Naive thymus-derived CD4-positive, alpha-beta T cell (primary cell): ENCODE measurements at regions of chr6 and their contacts with region 1.

Region 1: DNA sequence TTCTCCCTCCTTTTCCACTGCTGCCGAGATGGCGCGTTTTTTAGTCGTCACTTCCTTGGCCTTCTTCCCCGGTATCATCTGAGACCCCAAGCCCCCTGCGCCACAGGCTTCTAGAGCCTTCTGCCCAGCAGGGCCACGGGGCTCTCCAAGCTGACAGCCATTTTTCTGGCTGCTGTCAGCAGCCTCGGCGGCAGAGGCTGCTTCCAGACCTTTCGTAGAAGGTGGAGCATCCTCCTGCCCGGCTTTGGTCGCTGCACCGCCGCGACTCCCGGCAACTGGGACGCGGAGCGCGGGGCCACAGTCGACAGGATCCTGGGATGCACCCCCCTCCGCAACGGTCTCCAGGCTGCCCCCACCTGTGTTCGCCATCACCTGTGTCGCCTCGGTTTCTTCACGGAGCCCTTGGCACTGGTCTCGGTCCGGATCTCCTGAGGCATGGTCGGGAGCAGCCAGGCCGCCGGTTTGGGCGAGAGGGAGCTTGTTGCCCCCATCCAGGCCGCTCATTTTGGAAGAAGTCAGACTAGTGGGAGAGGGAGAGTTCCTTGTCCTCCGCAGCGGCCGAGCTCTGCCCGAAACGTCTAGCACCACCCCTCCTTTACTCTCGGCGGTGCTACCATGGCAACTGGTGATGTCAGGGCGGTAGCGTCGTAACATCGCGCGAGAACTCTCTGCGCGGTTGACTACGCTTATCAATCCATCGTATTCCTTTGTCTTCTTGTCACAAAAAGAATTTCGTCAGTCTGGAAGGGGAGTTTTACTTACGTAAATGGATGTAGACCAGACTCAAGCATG is at the start of gene TSPYL4:
- DNase-seq: peak; percentile 76 to 96 (median 91)
- ATAC-seq: peak; percentile 97
- H3K4me3 ChIP-seq: peak within 1 kb of the TSS; percentile 80
- H3K4me3 Mint-ChIP-seq: no peak within 1 kb of the TSS
- H3K27ac ChIP-seq: peak within 1 kb of the TSS; percentile 97
- H3K27ac Mint-ChIP-seq: no peak within 1 kb of the TSS
- H3K4me1 ChIP-seq: peaks cover 27 to 36% of the 10 kb centered on the region in 2 donors
- H3K4me1 Mint-ChIP-seq: peaks cover 3 to 43% (median 27%) of the 10 kb centered on the region in 7 donors
- H3K27me3 ChIP-seq: no peaks in the 10 kb centered on the region
- H3K27me3 Mint-ChIP-seq: no peaks in the 10 kb centered on the region
- total RNA-seq, gene TSPYL4: 18.2 to 58.2 (median 21.5) TPM

Region 2: GRCh38 chr6:116217069-116217468 is 36.6 kb before region 1 on chr6:
- CTCF ChIA-PET with region 1: no interaction called
- POLR2A ChIA-PET with region 1: no interaction called
- intact Hi-C with region 1: loop called in 1 of 2 experiments (anchors 1 kb)
- DNase-seq: peak in 6 of 9 donors; percentile 10 to 55 (median 44)
- ATAC-seq: peak; percentile 86
- H3K4me3 ChIP-seq: no peak overlapping the region
- H3K4me3 Mint-ChIP-seq: no peak overlapping the region
- H3K27ac ChIP-seq: no peak overlapping the region
- H3K27ac Mint-ChIP-seq: peak overlapping the region in 5 of 9 donors; percentile 7 to 76 (median 44)
- H3K4me1 ChIP-seq: no peaks in the 10 kb centered on the region
- H3K4me1 Mint-ChIP-seq: peaks cover 0 to 12% (median 6%) of the 10 kb centered on the region in 7 donors
- H3K27me3 ChIP-seq: no peaks in the 10 kb centered on the region
- H3K27me3 Mint-ChIP-seq: no peaks in the 10 kb centered on the region

Region 3: GRCh38 chr6:116268589-116269293 is 15.0 kb after region 1 on chr6:
- CTCF ChIA-PET with region 1: interaction called, 10 read pairs
- POLR2A ChIA-PET with region 1: interaction called, 7 read pairs
- intact Hi-C with region 1: loop called (anchors 1 to 2 kb)
- DNase-seq: peak in 7 of 9 donors; percentile 21 to 54 (median 49)
- ATAC-seq: peak; percentile 93
- H3K4me3 ChIP-seq: no peak overlapping the region
- H3K4me3 Mint-ChIP-seq: no peak overlapping the region
- H3K27ac ChIP-seq: peak overlapping the region; percentile 6
- H3K27ac Mint-ChIP-seq: peak overlapping the region in 7 of 9 donors; percentile 1 to 60 (median 23)
- H3K4me1 ChIP-seq: no peaks in the 10 kb centered on the region
- H3K4me1 Mint-ChIP-seq: peaks cover 8 to 56% (median 49%) of the 10 kb centered on the region in 7 donors
- H3K27me3 ChIP-seq: no peaks in the 10 kb centered on the region
- H3K27me3 Mint-ChIP-seq: no peaks in the 10 kb centered on the region

Region 4: GRCh38 chr6:116570856-116571682 is 317.4 kb after region 1 on chr6 and contains the start of gene RWDD1:
- CTCF ChIA-PET with region 1: no interaction called
- POLR2A ChIA-PET with region 1: interaction called, 11 read pairs
- intact Hi-C with region 1: loop called (anchors 1 kb)
- DNase-seq: peak; percentile 91 to 99 (median 98)
- ATAC-seq: peak; percentile 98
- H3K4me3 ChIP-seq: peak within 1 kb of the TSS; percentile 86
- H3K4me3 Mint-ChIP-seq: peak within 1 kb of the TSS; percentile 94 to 99 (median 98)
- H3K27ac ChIP-seq: peak within 1 kb of the TSS; percentile 95
- H3K27ac Mint-ChIP-seq: peak within 1 kb of the TSS; percentile 96 to 100 (median 99)
- H3K4me1 ChIP-seq: peaks cover 16 to 21% of the 10 kb centered on the region in 2 donors
- H3K4me1 Mint-ChIP-seq: peaks cover 33 to 62% (median 55%) of the 10 kb centered on the region in 7 donors
- H3K27me3 ChIP-seq: no peaks in the 10 kb centered on the region
- H3K27me3 Mint-ChIP-seq: peaks cover 0 to 11% (median 0%) of the 10 kb centered on the region in 5 donors
- total RNA-seq, gene RWDD1: 33.2 to 39.9 (median 36.7) TPM

Region 5: GRCh38 chr6:116667623-116668022 is 413.9 kb after region 1 on chr6:
- CTCF ChIA-PET with region 1: no interaction called
- POLR2A ChIA-PET with region 1: no interaction called
- intact Hi-C with region 1: loop called (anchors 1 to 5 kb)
- DNase-seq: no peak
- ATAC-seq: no peak
- H3K4me3 ChIP-seq: peak overlapping the region; percentile 92
- H3K4me3 Mint-ChIP-seq: peak overlapping the region; percentile 90 to 100 (median 98)
- H3K27ac ChIP-seq: peak overlapping the region; percentile 91
- H3K27ac Mint-ChIP-seq: peak overlapping the region; percentile 44 to 100 (median 98)
- H3K4me1 ChIP-seq: peaks cover 17 to 24% of the 10 kb centered on the region in 2 donors
- H3K4me1 Mint-ChIP-seq: peaks cover 29 to 55% (median 45%) of the 10 kb centered on the region in 7 donors
- H3K27me3 ChIP-seq: no peaks in the 10 kb centered on the region
- H3K27me3 Mint-ChIP-seq: peaks cover 0 to 15% (median 0%) of the 10 kb centered on the region in 5 donors

Region 6: DNA sequence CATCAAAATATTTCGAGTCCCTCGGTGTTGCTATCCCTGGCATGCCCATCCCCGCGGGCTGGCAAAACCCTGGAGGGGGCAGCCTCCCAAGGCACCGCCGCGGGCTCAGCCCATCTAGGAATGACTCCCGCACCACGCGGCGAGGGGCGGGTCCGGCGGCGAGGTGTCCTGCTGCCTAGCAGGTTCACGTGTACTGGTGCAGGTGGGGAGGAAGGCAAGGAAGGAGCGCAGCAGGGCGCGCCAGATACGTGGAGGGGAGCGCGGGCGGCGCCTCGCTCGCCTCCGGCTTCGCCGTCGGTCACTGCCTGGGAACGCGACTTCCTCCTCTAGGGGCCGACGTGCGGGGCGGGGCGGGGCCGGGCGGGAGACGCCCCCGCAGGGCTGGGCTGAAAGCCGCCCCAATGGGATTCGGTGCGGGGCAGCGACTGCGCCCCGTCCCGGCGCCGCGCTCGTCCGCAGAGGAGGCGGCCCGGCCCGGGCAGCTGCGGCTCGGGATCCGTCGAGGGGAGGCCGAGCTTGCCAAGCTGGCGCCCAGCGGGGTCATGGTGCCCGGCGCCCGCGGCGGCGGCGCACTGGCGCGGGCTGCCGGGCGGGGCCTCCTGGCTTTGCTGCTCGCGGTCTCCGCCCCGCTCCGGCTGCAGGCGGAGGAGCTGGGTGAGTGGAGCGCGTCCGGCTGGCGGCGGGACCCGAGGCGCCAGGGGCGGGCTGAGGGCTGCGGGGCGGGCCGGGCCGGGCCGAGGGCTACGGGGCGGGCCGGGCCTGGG is 1228.7 kb after region 1 on chr6 and contains the start of gene DCBLD1:
- CTCF ChIA-PET with region 1: no interaction called
- POLR2A ChIA-PET with region 1: no interaction called
- intact Hi-C with region 1: loop called in 1 of 2 experiments (anchors 5 kb)
- DNase-seq: peak in 8 of 9 donors; percentile 32 to 72 (median 36)
- ATAC-seq: peak; percentile 85
- H3K4me3 ChIP-seq: peak within 1 kb of the TSS; percentile 63
- H3K4me3 Mint-ChIP-seq: peak within 1 kb of the TSS; percentile 87 to 96 (median 91)
- H3K27ac ChIP-seq: no peak within 1 kb of the TSS
- H3K27ac Mint-ChIP-seq: peak within 1 kb of the TSS in 7 of 9 donors; percentile 28 to 84 (median 65)
- H3K4me1 ChIP-seq: peaks cover 8 to 10% of the 10 kb centered on the region in 2 donors
- H3K4me1 Mint-ChIP-seq: peaks cover 15 to 18% (median 16%) of the 10 kb centered on the region in 7 donors
- H3K27me3 ChIP-seq: no peaks in the 10 kb centered on the region
- H3K27me3 Mint-ChIP-seq: peaks cover 45 to 66% (median 53%) of the 10 kb centered on the region in 5 donors
- total RNA-seq, gene DCBLD1: 1.5 to 7.6 (median 5.6) TPM